Activated naive CD4-positive, alpha-beta T cell treated with anti-CD3 and anti-CD28 coated beads for 36 hours (primary cell): ENCODE measurements at regions of chr21 and their contacts with region 1.

Region 1: GRCh38 chr21:33924079-33924765 is 8.6 kb upstream of the ATP5PO start:
- DNase-seq: peak; percentile 96
- H3K4me3 Mint-ChIP-seq: no peak overlapping the region
- H3K27ac Mint-ChIP-seq: peak overlapping the region; percentile 24
- H3K4me1 Mint-ChIP-seq: peaks cover 10% of the 10 kb centered on the region
- H3K27me3 Mint-ChIP-seq: no peaks in the 10 kb centered on the region

Region 2: GRCh38 chr21:33947451-33948095 is 23.4 kb after region 1 on chr21:
- CTCF ChIA-PET with region 1: interaction called, 13 read pairs
- intact Hi-C with region 1: no loop called
- DNase-seq: peak; percentile 92
- H3K4me3 Mint-ChIP-seq: peak overlapping the region; percentile 65
- H3K27ac Mint-ChIP-seq: peak overlapping the region; percentile 97
- H3K4me1 Mint-ChIP-seq: peaks cover 77% of the 10 kb centered on the region
- H3K27me3 Mint-ChIP-seq: peaks cover 2% of the 10 kb centered on the region

Region 3: DNA sequence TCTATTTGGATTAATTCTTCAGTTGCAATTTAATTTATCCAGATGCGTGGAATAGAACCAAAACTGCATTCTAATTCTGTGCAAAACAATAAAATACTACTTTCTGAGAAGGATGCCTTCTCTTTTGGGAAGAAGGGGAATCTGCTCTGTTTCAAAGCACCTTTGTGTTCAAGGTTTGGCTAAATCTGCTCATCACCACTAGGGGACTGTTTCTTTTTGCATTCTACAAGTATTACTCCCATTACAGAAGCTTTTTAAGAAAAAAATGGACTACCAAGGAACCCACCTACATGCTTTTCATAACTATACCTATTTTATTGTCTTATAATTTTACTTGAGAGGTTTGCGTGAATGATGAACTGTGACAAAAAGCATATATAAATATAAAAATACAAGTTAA is 167.4 kb after region 1 on chr21:
- CTCF ChIA-PET with region 1: interaction called, 18 read pairs
- intact Hi-C with region 1: no loop called
- DNase-seq: no peak
- H3K4me3 Mint-ChIP-seq: no peak overlapping the region
- H3K27ac Mint-ChIP-seq: no peak overlapping the region
- H3K4me1 Mint-ChIP-seq: peaks cover 44% of the 10 kb centered on the region
- H3K27me3 Mint-ChIP-seq: no peaks in the 10 kb centered on the region

Region 4: DNA sequence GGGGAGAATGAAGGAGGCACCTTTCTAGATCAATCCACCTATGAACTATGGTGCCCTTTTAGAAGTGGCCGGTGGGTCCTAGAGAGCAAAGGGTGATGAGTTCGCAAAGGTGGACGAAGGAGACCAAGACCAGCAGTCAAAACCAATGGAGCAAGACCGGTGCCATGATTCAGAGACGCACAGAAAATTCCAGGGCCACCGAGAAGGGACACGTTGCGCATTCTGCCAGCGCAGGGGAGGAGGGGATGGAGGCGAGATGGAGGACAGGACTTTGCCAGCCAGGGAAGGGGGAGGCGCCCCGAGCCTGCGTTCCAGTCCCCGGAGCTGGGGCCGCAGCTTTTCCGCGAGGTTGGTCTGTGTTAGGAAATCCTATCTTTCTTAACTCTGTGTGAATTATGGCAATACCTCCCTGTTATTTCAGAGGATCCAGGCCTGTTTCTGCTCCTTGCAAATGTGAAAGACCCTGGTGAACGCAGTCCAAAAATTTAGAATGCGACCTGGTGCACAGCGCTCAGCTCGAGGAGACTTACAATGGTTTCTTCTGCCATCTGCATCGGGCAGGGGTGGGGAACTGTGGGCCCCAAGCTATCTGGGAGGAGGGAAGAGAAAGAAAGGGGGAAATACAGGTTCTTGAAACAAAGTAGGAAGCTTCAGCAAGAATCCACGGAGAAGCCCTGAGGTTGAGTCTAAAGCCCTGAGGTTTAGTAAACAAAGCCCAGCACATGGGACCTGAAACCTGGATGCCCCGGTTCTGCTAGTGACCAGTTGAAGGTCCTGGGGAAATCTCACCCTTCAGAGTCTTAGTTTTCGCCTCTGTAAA is 278.5 kb after region 1 on chr21:
- CTCF ChIA-PET with region 1: interaction called, 38 read pairs
- intact Hi-C with region 1: loop called (anchors 5 kb)
- DNase-seq: no peak
- H3K4me3 Mint-ChIP-seq: peak overlapping the region; percentile 61
- H3K27ac Mint-ChIP-seq: no peak overlapping the region
- H3K4me1 Mint-ChIP-seq: peaks cover 43% of the 10 kb centered on the region
- H3K27me3 Mint-ChIP-seq: no peaks in the 10 kb centered on the region

Region 5: GRCh38 chr21:34243562-34243961 is 319.3 kb after region 1 on chr21:
- CTCF ChIA-PET with region 1: interaction called, 20 read pairs
- intact Hi-C with region 1: loop called (anchors 1 kb)
- DNase-seq: peak; percentile 60
- H3K4me3 Mint-ChIP-seq: no peak overlapping the region
- H3K27ac Mint-ChIP-seq: no peak overlapping the region
- H3K4me1 Mint-ChIP-seq: no peaks in the 10 kb centered on the region
- H3K27me3 Mint-ChIP-seq: no peaks in the 10 kb centered on the region

Region 6: GRCh38 chr21:34351786-34352241 is 427.6 kb after region 1 on chr21:
- CTCF ChIA-PET with region 1: interaction called, 168 read pairs
- intact Hi-C with region 1: loop called (anchors 1 kb)
- DNase-seq: peak; percentile 45
- H3K4me3 Mint-ChIP-seq: no peak overlapping the region
- H3K27ac Mint-ChIP-seq: no peak overlapping the region
- H3K4me1 Mint-ChIP-seq: peaks cover 3% of the 10 kb centered on the region
- H3K27me3 Mint-ChIP-seq: peaks cover 3% of the 10 kb centered on the region

Region 7: GRCh38 chr21:34936371-34936789 is 1012.2 kb after region 1 on chr21:
- CTCF ChIA-PET with region 1: no interaction called
- intact Hi-C with region 1: no loop called
- DNase-seq: peak; percentile 30
- H3K4me3 Mint-ChIP-seq: peak overlapping the region; percentile 67
- H3K27ac Mint-ChIP-seq: peak overlapping the region; percentile 97
- H3K4me1 Mint-ChIP-seq: peaks cover 92% of the 10 kb centered on the region
- H3K27me3 Mint-ChIP-seq: no peaks in the 10 kb centered on the region